Right cardiac atrium (tissue), 5 donors: ENCODE measurements at regions of chr6 and their contacts with region 1.

Region 1: GRCh38 chr6:52577022-52577777 is at the start of gene TRAM2:
- DNase-seq: peak; percentile 90 to 97 (median 95)
- ATAC-seq: peak; percentile 89 to 91
- H3K4me3 ChIP-seq: peak within 1 kb of the TSS; percentile 83
- H3K27ac ChIP-seq: peak within 1 kb of the TSS; percentile 93
- H3K4me1 ChIP-seq: peaks cover 23% of the 10 kb centered on the region
- H3K27me3 ChIP-seq: no peaks in the 10 kb centered on the region
- total RNA-seq, gene TRAM2: 14.5 to 18.2 (median 15.2) TPM

Region 2: DNA sequence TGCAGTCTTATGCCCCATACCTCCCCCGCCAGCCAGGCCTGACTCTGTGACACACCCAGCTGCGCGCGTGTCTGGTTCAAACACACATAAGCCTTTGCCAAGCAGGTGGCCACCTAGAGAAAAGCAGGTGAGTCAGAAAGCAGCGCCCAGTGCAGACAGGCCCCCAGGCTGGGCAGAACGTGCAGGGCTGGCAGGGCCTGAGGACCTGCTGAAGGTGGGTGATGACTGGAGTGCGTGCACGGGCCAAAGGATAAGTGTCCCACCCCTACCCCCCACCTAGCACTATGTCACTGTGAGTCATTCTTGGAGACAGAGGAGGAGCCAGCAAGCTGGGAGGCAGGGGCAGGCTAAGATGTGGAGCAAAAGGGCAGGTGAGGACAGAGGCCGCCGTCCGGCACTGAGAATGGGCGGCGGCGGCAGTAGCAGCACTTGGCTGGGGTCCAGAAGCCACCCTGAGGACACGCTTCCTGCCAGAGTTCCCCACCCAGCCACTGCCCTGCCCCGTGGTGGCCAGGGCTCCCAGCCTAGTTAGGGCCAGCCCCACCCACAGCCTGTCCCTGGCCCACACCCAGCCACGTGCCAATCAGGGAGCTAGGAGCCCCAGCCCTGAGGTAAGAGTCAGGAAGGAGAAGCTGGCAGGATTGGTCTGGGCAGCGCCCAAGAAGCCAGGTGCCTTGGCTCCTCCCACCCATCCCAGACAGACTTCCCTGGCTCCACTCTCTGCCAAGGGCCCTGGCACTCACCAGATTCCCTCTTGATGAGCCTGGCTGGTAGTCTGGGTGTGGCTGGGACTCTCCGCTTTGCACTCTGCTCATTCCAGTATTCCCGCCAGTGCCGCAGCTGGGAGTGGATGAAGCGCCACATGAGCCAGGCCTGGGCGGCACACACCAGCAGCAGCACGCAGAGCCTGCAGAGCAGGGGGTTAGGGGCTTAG is 73.1 kb before region 1 on chr6:
- intact Hi-C with region 1: loop called in 3 of 4 experiments (anchors 5 to 10 kb)
- DNase-seq: peak; percentile 92 to 94 (median 94)
- ATAC-seq: peak; percentile 89 to 93
- H3K4me3 ChIP-seq: no peak overlapping the region
- H3K27ac ChIP-seq: peak overlapping the region; percentile 58
- H3K4me1 ChIP-seq: peaks cover 13% of the 10 kb centered on the region
- H3K27me3 ChIP-seq: no peaks in the 10 kb centered on the region

Region 3: GRCh38 chr6:52512199-52512598 is 65.0 kb before region 1 on chr6:
- intact Hi-C with region 1: loop called in 2 of 4 experiments (anchors 5 to 10 kb)
- DNase-seq: peak; percentile 72 to 79 (median 73)
- ATAC-seq: peak; percentile 95 to 96
- H3K4me3 ChIP-seq: no peak overlapping the region
- H3K27ac ChIP-seq: peak overlapping the region; percentile 99
- H3K4me1 ChIP-seq: peaks cover 16% of the 10 kb centered on the region
- H3K27me3 ChIP-seq: no peaks in the 10 kb centered on the region

Region 4: GRCh38 chr6:52610745-52611355 is 33.6 kb after region 1 on chr6:
- intact Hi-C with region 1: no loop called
- DNase-seq: no peak
- ATAC-seq: no peak
- H3K4me3 ChIP-seq: no peak overlapping the region
- H3K27ac ChIP-seq: no peak overlapping the region
- H3K4me1 ChIP-seq: no peaks in the 10 kb centered on the region
- H3K27me3 ChIP-seq: no peaks in the 10 kb centered on the region